ENCODE measurements at regions of chr10 and their contacts with region 1.

Region 1: GRCh38 chr10:46030091-46030937 is at the start of gene NCOA4:
- DNase-seq: peak; percentile 94
- H3K4me3 ChIP-seq: peak within 1 kb of the TSS; percentile 88 to 90 (median 89)
- H3K27ac ChIP-seq: peak within 1 kb of the TSS; percentile 79
- H3K4me1 ChIP-seq: peaks cover 28% of the 10 kb centered on the region
- H3K27me3 ChIP-seq: no peaks in the 10 kb centered on the region
- CTCF ChIP-seq: peak; percentile 79 to 81
- total RNA-seq, gene NCOA4: 94.2 to 171 TPM

Region 2: GRCh38 chr10:46042527-46042926 is 12.2 kb after region 1 on chr10:
- CTCF ChIA-PET with region 1: no interaction called
- dilution Hi-C with region 1: no loop called
- in situ Hi-C with region 1: no loop called
- intact Hi-C with region 1: loop called (anchors 1 kb)
- DNase-seq: peak; percentile 76
- H3K4me3 ChIP-seq: no peak overlapping the region
- H3K27ac ChIP-seq: no peak overlapping the region
- H3K4me1 ChIP-seq: peaks cover 12% of the 10 kb centered on the region
- H3K27me3 ChIP-seq: no peaks in the 10 kb centered on the region
- CTCF ChIP-seq: no peak

Region 3: GRCh38 chr10:46080886-46081285 is 50.6 kb after region 1 on chr10:
- CTCF ChIA-PET with region 1: no interaction called
- dilution Hi-C with region 1: no loop called
- in situ Hi-C with region 1: no loop called
- intact Hi-C with region 1: no loop called
- DNase-seq: no peak
- H3K4me3 ChIP-seq: no peak overlapping the region
- H3K27ac ChIP-seq: no peak overlapping the region
- H3K4me1 ChIP-seq: no peaks in the 10 kb centered on the region
- H3K27me3 ChIP-seq: no peaks in the 10 kb centered on the region
- CTCF ChIP-seq: no peak